ENCODE measurements at regions of chr5 and their contacts with region 1.

Region 1: DNA sequence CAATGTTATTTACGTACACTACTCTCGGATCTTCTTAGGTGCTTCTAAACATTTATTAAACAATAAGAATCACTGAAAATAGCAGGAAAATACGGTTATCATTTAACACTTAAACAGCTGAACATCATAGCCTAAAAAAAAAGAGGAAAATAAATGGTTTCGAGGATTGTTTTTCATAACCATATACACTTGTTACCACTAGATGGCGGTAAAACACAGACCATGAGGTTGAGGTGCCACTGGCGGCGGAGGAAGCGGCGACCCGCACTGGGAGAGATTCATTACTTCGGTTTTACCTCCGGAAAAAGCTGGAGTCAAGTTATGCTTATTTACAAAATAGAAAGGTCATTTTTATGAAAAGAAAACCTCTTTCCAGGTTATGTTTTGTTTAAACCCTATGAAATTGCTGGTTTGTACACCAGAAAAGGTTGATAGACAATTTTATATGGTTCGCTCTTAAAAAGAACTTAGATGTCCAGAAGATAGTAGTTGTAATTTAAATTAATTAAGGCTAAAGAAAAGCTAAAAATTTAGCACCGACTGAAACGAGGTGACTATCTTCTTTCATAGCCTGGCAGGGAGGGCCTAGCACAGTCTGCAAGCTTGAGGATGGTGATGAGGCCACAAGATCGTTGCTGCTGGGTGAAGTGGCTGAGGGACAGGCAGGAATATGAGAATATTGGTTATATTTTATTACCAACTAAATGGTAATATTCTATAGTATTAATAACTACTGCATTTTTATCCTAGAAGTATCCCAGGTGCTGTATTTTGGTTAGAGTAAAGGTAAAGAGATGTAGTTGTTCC is 605.7 kb downstream of the RAB3C start:
- DNase-seq: peak; percentile 74
- H3K4me3 Mint-ChIP-seq: no peak overlapping the region
- H3K27ac Mint-ChIP-seq: no peak overlapping the region
- H3K4me1 Mint-ChIP-seq: peaks cover 3% of the 10 kb centered on the region
- H3K27me3 Mint-ChIP-seq: peaks cover 22% of the 10 kb centered on the region

Region 2: DNA sequence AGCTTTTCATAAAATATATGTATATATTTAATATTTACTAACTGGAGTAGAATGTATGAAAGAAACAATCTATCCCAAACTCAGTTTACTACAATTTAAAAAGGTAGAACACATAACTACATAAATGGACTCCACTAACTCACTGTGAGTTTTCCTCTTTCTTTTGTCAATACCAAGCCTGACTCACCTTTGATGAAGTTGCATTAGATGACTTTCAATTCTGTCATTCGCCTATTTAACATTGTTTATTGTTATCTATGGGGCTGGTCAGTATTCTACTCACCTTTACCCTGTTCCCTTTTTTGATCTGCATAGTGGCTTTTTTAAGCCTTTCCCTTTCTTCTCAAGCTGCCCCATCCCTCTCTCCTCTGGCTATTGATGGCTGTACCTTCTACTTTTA is 24.0 kb after region 1 on chr5:
- CTCF ChIA-PET with region 1: interaction called, 11 read pairs
- POLR2A ChIA-PET with region 1: no interaction called
- intact Hi-C with region 1: no loop called
- DNase-seq: no peak
- H3K4me3 Mint-ChIP-seq: no peak overlapping the region
- H3K27ac Mint-ChIP-seq: no peak overlapping the region
- H3K4me1 Mint-ChIP-seq: no peaks in the 10 kb centered on the region
- H3K27me3 Mint-ChIP-seq: peaks cover 33% of the 10 kb centered on the region

Region 3: GRCh38 chr5:59351076-59351794 is 162.6 kb after region 1 on chr5:
- CTCF ChIA-PET with region 1: interaction called, 13 read pairs
- POLR2A ChIA-PET with region 1: no interaction called
- intact Hi-C with region 1: no loop called
- DNase-seq: no peak
- H3K4me3 Mint-ChIP-seq: no peak overlapping the region
- H3K27ac Mint-ChIP-seq: no peak overlapping the region
- H3K4me1 Mint-ChIP-seq: no peaks in the 10 kb centered on the region
- H3K27me3 Mint-ChIP-seq: peaks cover 8% of the 10 kb centered on the region

Region 4: GRCh38 chr5:59380350-59380951 is 191.8 kb after region 1 on chr5:
- CTCF ChIA-PET with region 1: interaction called, 111 read pairs
- POLR2A ChIA-PET with region 1: no interaction called
- intact Hi-C with region 1: loop called (anchors 1 kb)
- DNase-seq: peak; percentile 24
- H3K4me3 Mint-ChIP-seq: no peak overlapping the region
- H3K27ac Mint-ChIP-seq: no peak overlapping the region
- H3K4me1 Mint-ChIP-seq: no peaks in the 10 kb centered on the region
- H3K27me3 Mint-ChIP-seq: no peaks in the 10 kb centered on the region

Region 5: GRCh38 chr5:59466271-59466670 is 277.6 kb after region 1 on chr5:
- CTCF ChIA-PET with region 1: no interaction called
- POLR2A ChIA-PET with region 1: no interaction called
- intact Hi-C with region 1: no loop called
- DNase-seq: no peak
- H3K4me3 Mint-ChIP-seq: no peak overlapping the region
- H3K27ac Mint-ChIP-seq: no peak overlapping the region
- H3K4me1 Mint-ChIP-seq: no peaks in the 10 kb centered on the region
- H3K27me3 Mint-ChIP-seq: no peaks in the 10 kb centered on the region

Region 6: DNA sequence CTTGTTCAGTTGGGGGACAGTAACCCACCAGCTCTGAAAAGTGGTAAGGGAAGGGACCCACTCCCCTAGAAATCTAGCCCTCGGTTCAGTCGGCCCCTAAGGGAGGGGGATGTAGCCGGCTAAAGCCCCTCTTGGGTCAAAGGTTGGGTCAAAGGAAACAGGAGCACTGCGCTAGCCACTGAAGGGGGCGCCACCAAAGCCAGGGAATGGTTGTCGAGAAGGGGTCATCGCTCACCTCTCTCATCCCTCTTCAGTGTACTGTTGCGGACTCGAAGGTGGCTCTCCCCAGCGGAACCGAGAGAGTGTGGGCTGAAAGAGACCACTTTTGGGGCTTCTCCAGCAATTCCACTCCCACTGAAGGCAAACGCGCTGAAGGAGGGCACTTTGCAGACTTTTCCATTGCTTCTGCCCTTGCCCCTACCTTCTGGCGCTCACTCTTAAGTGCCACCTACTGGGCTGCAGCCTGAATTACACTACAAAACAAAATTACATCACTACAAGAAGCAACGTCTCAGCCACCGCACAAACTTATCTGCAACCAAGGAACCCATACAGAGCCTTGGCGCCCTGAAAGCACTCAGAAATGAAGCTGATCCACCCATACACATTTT is 308.0 kb after region 1 on chr5:
- CTCF ChIA-PET with region 1: interaction called, 3 read pairs
- POLR2A ChIA-PET with region 1: no interaction called
- intact Hi-C with region 1: loop called (anchors 10 kb)
- DNase-seq: peak; percentile 17
- H3K4me3 Mint-ChIP-seq: no peak overlapping the region
- H3K27ac Mint-ChIP-seq: no peak overlapping the region
- H3K4me1 Mint-ChIP-seq: no peaks in the 10 kb centered on the region
- H3K27me3 Mint-ChIP-seq: peaks cover 11% of the 10 kb centered on the region

Region 7: GRCh38 chr5:59608745-59609144 is 420.1 kb after region 1 on chr5:
- CTCF ChIA-PET with region 1: no interaction called
- POLR2A ChIA-PET with region 1: no interaction called
- intact Hi-C with region 1: no loop called
- DNase-seq: no peak
- H3K4me3 Mint-ChIP-seq: no peak overlapping the region
- H3K27ac Mint-ChIP-seq: no peak overlapping the region
- H3K4me1 Mint-ChIP-seq: peaks cover 10% of the 10 kb centered on the region
- H3K27me3 Mint-ChIP-seq: peaks cover 9% of the 10 kb centered on the region

Region 8: GRCh38 chr5:59799668-59800346 is 611.2 kb after region 1 on chr5:
- CTCF ChIA-PET with region 1: interaction called, 9 read pairs
- POLR2A ChIA-PET with region 1: no interaction called
- intact Hi-C with region 1: loop called (anchors 2 kb)
- DNase-seq: no peak
- H3K4me3 Mint-ChIP-seq: no peak overlapping the region
- H3K27ac Mint-ChIP-seq: no peak overlapping the region
- H3K4me1 Mint-ChIP-seq: no peaks in the 10 kb centered on the region
- H3K27me3 Mint-ChIP-seq: peaks cover 7% of the 10 kb centered on the region